Posterior vena cava (tissue), 2 donors: ENCODE measurements at regions of chr11 and their contacts with region 1.

Region 1: GRCh38 chr11:819129-819931 is 616 bp downstream of the PNPLA2 start:
- DNase-seq: peak; percentile 97

Region 2: GRCh38 chr11:1827095-1827813 is 1007.9 kb after region 1 on chr11:
- intact Hi-C with region 1: loop called in 1 of 2 experiments (anchors 5 kb)
- DNase-seq: peak; percentile 84